GM12878 (cell line): ENCODE measurements at regions of chr3 and their contacts with region 1.

Region 1: GRCh38 chr3:185308126-185308754 is 54.4 kb upstream of the EHHADH start:
- DNase-seq: peak; percentile 49
- ATAC-seq: peak; percentile 86
- H3K4me3 ChIP-seq: no peak overlapping the region
- H3K27ac ChIP-seq: no peak overlapping the region
- H3K4me1 ChIP-seq: no peaks in the 10 kb centered on the region
- H3K27me3 ChIP-seq: no peaks in the 10 kb centered on the region
- CTCF ChIP-seq: peak; percentile 80 to 86 (median 83)
- EP300 ChIP-seq: no peak
- POLR2A ChIP-seq: no peak
- RAD21 ChIP-seq: peak; percentile 89

Region 2: GRCh38 chr3:185176750-185177359 is 131.4 kb before region 1 on chr3:
- CTCF ChIA-PET with region 1: interaction called, 36 read pairs
- POLR2A ChIA-PET with region 1: no interaction called
- RAD21 ChIA-PET with region 1: interaction called, 10 read pairs
- SMC1A ChIA-PET with region 1: interaction called, 12 read pairs
- in situ Hi-C with region 1: no loop called
- intact Hi-C with region 1: no loop called
- DNase-seq: no peak
- ATAC-seq: peak; percentile 69
- H3K4me3 ChIP-seq: no peak overlapping the region
- H3K27ac ChIP-seq: no peak overlapping the region
- H3K4me1 ChIP-seq: peaks cover 21% of the 10 kb centered on the region
- H3K27me3 ChIP-seq: no peaks in the 10 kb centered on the region
- CTCF ChIP-seq: peak; percentile 53 to 63 (median 61); a peak in 5 of 6 replicates
- EP300 ChIP-seq: no peak
- POLR2A ChIP-seq: no peak
- RAD21 ChIP-seq: peak; percentile 67

Region 3: GRCh38 chr3:185280572-185281365 is 27.5 kb before region 1 on chr3:
- CTCF ChIA-PET with region 1: interaction called, 90 read pairs
- POLR2A ChIA-PET with region 1: no interaction called
- RAD21 ChIA-PET with region 1: interaction called, 11 read pairs
- SMC1A ChIA-PET with region 1: interaction called, 29 read pairs
- in situ Hi-C with region 1: no loop called
- intact Hi-C with region 1: no loop called
- DNase-seq: peak; percentile 23
- ATAC-seq: peak; percentile 61
- H3K4me3 ChIP-seq: no peak overlapping the region
- H3K27ac ChIP-seq: no peak overlapping the region
- H3K4me1 ChIP-seq: no peaks in the 10 kb centered on the region
- H3K27me3 ChIP-seq: no peaks in the 10 kb centered on the region
- CTCF ChIP-seq: peak; percentile 56 to 75 (median 67)
- EP300 ChIP-seq: no peak
- POLR2A ChIP-seq: no peak
- RAD21 ChIP-seq: peak; percentile 21; the same call in 1 of the 2 replicates

Region 4: GRCh38 chr3:185297867-185298266 is 10.4 kb before region 1 on chr3:
- CTCF ChIA-PET with region 1: interaction called, 12 read pairs
- POLR2A ChIA-PET with region 1: interaction called, 5 read pairs
- RAD21 ChIA-PET with region 1: interaction called, 13 read pairs
- SMC1A ChIA-PET with region 1: interaction called, 35 read pairs
- in situ Hi-C with region 1: no loop called
- intact Hi-C with region 1: no loop called
- DNase-seq: no peak
- ATAC-seq: no peak
- H3K4me3 ChIP-seq: no peak overlapping the region
- H3K27ac ChIP-seq: peak overlapping the region; percentile 81; the same call in 1 of the 2 replicates
- H3K4me1 ChIP-seq: peaks cover 14% of the 10 kb centered on the region
- H3K27me3 ChIP-seq: no peaks in the 10 kb centered on the region
- CTCF ChIP-seq: no peak
- EP300 ChIP-seq: no peak
- POLR2A ChIP-seq: no peak
- RAD21 ChIP-seq: no peak

Region 5: GRCh38 chr3:185519021-185519420 is 210.8 kb after region 1 on chr3:
- CTCF ChIA-PET with region 1: no interaction called
- POLR2A ChIA-PET with region 1: no interaction called
- RAD21 ChIA-PET with region 1: no interaction called
- SMC1A ChIA-PET with region 1: no interaction called
- in situ Hi-C with region 1: no loop called
- intact Hi-C with region 1: no loop called
- DNase-seq: no peak
- ATAC-seq: no peak
- H3K4me3 ChIP-seq: no peak overlapping the region
- H3K27ac ChIP-seq: no peak overlapping the region
- H3K4me1 ChIP-seq: peaks cover 4% of the 10 kb centered on the region; the same call in 1 of the 2 replicates
- H3K27me3 ChIP-seq: no peaks in the 10 kb centered on the region
- CTCF ChIP-seq: no peak
- EP300 ChIP-seq: no peak
- POLR2A ChIP-seq: no peak
- RAD21 ChIP-seq: no peak